H1 (cell line): ENCODE measurements at regions of chr5 and their contacts with region 1.

Region 1: DNA sequence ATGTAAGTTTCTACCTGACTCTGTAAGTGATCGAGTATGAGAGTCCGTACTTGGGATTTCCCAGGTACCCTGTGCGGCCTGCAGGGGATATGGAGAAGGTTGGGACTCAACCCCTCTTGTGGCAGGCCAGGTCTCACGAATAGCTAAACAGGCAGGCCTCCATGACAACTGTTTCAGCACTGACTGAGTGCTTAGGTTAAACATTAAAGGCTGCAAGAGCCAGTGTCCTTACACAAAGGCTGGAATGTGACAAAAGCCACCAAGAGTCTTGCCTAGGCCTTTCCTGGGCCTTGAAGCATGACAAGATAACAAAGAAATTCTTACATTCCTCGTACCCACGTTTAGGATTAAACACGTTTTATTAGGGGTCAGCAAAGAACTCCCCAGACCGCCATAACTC is 58.6 kb downstream of the THBS4 start:
- DNase-seq: no peak
- H3K4me3 ChIP-seq: no peak overlapping the region
- H3K27ac ChIP-seq: no peak overlapping the region
- H3K4me1 ChIP-seq: peaks cover 5 to 12% (median 8%) of the 10 kb centered on the region in 4 experiments
- H3K27me3 ChIP-seq: no peaks in the 10 kb centered on the region
- CTCF ChIP-seq: peak in 2 of 3 experiments; percentile 7 to 11; a peak in 2 of 4 replicates
- EP300 ChIP-seq: no peak
- POLR2A ChIP-seq: no peak
- RAD21 ChIP-seq: peak in 1 of 2 experiments; percentile 35; a peak in 2 of 4 replicates

Region 2: DNA sequence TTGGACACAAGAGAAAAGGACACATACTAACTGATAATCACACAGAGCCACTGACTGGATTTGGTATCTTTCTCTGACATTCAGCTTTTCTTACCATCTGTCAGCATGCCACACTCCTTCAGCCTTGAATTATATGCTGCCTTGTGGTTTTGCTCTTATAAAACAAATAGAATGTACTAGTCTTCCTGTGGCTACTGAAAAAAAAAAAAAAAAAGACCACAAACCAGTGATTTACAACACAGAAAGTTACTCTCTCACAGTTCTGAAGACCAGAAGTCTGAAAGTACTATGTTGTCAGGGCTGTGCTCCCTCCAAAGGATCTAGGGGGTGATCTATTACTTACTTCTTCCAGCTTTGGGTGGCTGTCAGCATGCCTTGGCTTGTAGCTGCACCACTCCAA is 23.6 kb after region 1 on chr5:
- CTCF ChIA-PET with region 1: interaction called, 15 read pairs
- POLR2A ChIA-PET with region 1: no interaction called
- DNase-seq: no peak
- H3K4me3 ChIP-seq: no peak overlapping the region
- H3K27ac ChIP-seq: no peak overlapping the region
- H3K4me1 ChIP-seq: no peaks in the 10 kb centered on the region
- H3K27me3 ChIP-seq: peaks cover 0 to 2% (median 0%) of the 10 kb centered on the region in 4 experiments; a peak in 1 of 7 replicates
- CTCF ChIP-seq: no peak
- EP300 ChIP-seq: no peak
- POLR2A ChIP-seq: no peak
- RAD21 ChIP-seq: no peak

Region 3: GRCh38 chr5:80141147-80141671 is 47.4 kb after region 1 on chr5:
- CTCF ChIA-PET with region 1: interaction called, 11 read pairs
- POLR2A ChIA-PET with region 1: interaction called, 5 read pairs
- DNase-seq: peak; percentile 61 to 71
- H3K4me3 ChIP-seq: peak overlapping the region in 1 of 4 experiments; percentile 23; a peak in 2 of 8 replicates
- H3K27ac ChIP-seq: peak overlapping the region; percentile 85
- H3K4me1 ChIP-seq: peaks cover 16 to 33% (median 26%) of the 10 kb centered on the region in 4 experiments
- H3K27me3 ChIP-seq: no peaks in the 10 kb centered on the region
- CTCF ChIP-seq: no peak
- EP300 ChIP-seq: no peak
- POLR2A ChIP-seq: peak in 1 of 2 experiments; percentile 60; a peak in 1 of 3 replicates
- RAD21 ChIP-seq: peak; percentile 3 to 25; a peak in 2 of 4 replicates

Region 4: DNA sequence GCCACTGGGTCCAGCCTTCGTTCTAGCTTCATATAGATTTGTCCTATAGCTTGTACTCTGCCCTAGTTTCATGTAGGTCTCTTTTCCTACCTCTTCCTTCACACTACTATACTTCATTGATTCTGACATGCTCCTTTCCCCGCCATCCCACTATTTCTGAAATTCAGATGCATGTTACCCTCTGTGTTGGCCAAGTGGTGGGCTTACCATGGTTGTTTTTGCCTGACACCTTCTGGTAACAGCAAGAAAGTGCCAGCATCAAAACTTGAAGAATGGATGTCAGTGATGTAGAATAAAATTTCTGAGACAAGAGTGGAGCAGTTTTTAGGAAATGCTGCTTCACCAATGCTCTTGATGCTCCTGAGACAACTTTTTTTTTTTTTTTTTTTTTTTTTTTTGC is 181.6 kb after region 1 on chr5:
- CTCF ChIA-PET with region 1: interaction called, 100 read pairs
- POLR2A ChIA-PET with region 1: no interaction called
- DNase-seq: no peak
- H3K4me3 ChIP-seq: no peak overlapping the region
- H3K27ac ChIP-seq: no peak overlapping the region
- H3K4me1 ChIP-seq: no peaks in the 10 kb centered on the region
- H3K27me3 ChIP-seq: no peaks in the 10 kb centered on the region
- CTCF ChIP-seq: peak in 2 of 3 experiments; percentile 78; a peak in 3 of 4 replicates
- EP300 ChIP-seq: no peak
- POLR2A ChIP-seq: no peak
- RAD21 ChIP-seq: peak; percentile 95 to 96

Region 5: GRCh38 chr5:80308526-80308925 is 214.7 kb after region 1 on chr5:
- CTCF ChIA-PET with region 1: interaction called, 118 read pairs
- POLR2A ChIA-PET with region 1: interaction called, 3 read pairs
- DNase-seq: peak in 1 of 2 experiments; percentile 42
- H3K4me3 ChIP-seq: no peak overlapping the region
- H3K27ac ChIP-seq: no peak overlapping the region
- H3K4me1 ChIP-seq: no peaks in the 10 kb centered on the region
- H3K27me3 ChIP-seq: no peaks in the 10 kb centered on the region
- CTCF ChIP-seq: no peak
- EP300 ChIP-seq: no peak
- POLR2A ChIP-seq: no peak
- RAD21 ChIP-seq: no peak